PC-9 (cell line): ENCODE measurements at regions of chr10 and their contacts with region 1.

Region 1: DNA sequence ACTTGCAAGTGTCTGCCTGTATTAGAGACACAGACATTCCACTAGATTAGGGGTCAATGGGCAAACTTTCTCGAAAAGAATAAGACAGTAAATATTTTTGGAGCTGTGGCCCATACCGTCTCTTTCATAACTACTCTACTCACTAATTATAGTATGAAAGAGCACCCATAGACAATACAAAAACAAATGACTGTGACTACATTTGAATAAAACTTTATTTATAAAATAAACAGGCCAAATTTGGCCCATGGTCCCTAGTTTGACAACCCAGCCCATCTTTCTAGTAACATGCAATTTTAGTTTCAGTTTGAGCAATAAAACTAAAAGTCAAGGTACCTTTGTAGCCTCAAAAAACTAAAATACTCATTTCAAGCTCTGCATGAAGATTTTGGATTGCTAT is 294.6 kb downstream of the PARD3 start:
- DNase-seq: no peak
- H3K4me3 ChIP-seq: no peak overlapping the region
- H3K27ac ChIP-seq: 0 out of 2 replicates have a peak overlapping the region, but pooled peaks have one; percentile 32
- H3K4me1 ChIP-seq: peaks cover 13% of the 10 kb centered on the region
- H3K27me3 ChIP-seq: no peaks in the 10 kb centered on the region
- CTCF ChIP-seq: no peak

Region 2: GRCh38 chr10:34121781-34122628 is 398.5 kb before region 1 on chr10:
- CTCF ChIA-PET with region 1: interaction called, 16 read pairs
- POLR2A ChIA-PET with region 1: no interaction called
- intact Hi-C with region 1: no loop called
- DNase-seq: no peak
- H3K4me3 ChIP-seq: no peak overlapping the region
- H3K27ac ChIP-seq: no peak overlapping the region
- H3K4me1 ChIP-seq: peaks cover 15% of the 10 kb centered on the region
- H3K27me3 ChIP-seq: no peaks in the 10 kb centered on the region
- CTCF ChIP-seq: no peak

Region 3: GRCh38 chr10:34689053-34689452 is 168.5 kb after region 1 on chr10:
- CTCF ChIA-PET with region 1: no interaction called
- POLR2A ChIA-PET with region 1: no interaction called
- intact Hi-C with region 1: no loop called
- DNase-seq: no peak
- H3K4me3 ChIP-seq: no peak overlapping the region
- H3K27ac ChIP-seq: no peak overlapping the region
- H3K4me1 ChIP-seq: no peaks in the 10 kb centered on the region
- H3K27me3 ChIP-seq: no peaks in the 10 kb centered on the region
- CTCF ChIP-seq: no peak